CD14-positive monocyte (primary cell): ENCODE measurements at regions of chr7 and their contacts with region 1.

Region 1: GRCh38 chr7:123797673-123798527 is 47.1 kb upstream of the HYAL4 start:
- DNase-seq: peak in 2 of 3 donors; percentile 21 to 39
- H3K4me3 ChIP-seq: no peak overlapping the region
- H3K4me3 Mint-ChIP-seq: no peak overlapping the region
- H3K27ac ChIP-seq: no peak overlapping the region
- H3K27ac Mint-ChIP-seq: no peak overlapping the region
- H3K4me1 ChIP-seq: no peaks in the 10 kb centered on the region
- H3K4me1 Mint-ChIP-seq: no peaks in the 10 kb centered on the region
- H3K27me3 ChIP-seq: no peaks in the 10 kb centered on the region
- H3K27me3 Mint-ChIP-seq: peaks cover 0 to 5% (median under 1%) of the 10 kb centered on the region in 3 donors
- CTCF ChIP-seq: peak; percentile 73

Region 2: DNA sequence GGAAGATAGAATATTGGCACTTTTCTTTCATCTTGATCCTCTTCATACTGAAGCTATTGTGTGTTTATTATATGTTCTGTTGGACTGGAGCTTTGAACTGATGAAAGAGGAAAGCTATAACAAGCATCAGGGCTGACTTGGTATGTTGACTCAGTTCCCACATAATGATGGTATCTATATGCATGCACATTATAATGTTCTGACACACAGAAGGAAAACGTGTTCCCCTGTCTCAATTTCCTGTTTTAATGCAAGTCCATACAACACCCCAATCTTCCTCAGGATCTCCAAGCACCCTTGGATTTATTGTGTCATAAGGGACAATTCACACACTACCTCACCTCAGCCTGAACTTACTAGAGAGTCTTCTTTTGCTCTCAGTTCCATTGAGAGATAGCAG is 40.8 kb before region 1 on chr7:
- intact Hi-C with region 1: no loop called
- DNase-seq: no peak
- H3K4me3 ChIP-seq: no peak overlapping the region
- H3K4me3 Mint-ChIP-seq: no peak overlapping the region
- H3K27ac ChIP-seq: no peak overlapping the region
- H3K27ac Mint-ChIP-seq: no peak overlapping the region
- H3K4me1 ChIP-seq: peaks cover 0 to 4% of the 10 kb centered on the region in 2 donors
- H3K4me1 Mint-ChIP-seq: peaks cover 11% of the 10 kb centered on the region
- H3K27me3 ChIP-seq: no peaks in the 10 kb centered on the region
- H3K27me3 Mint-ChIP-seq: peaks cover 0 to 2% (median 2%) of the 10 kb centered on the region in 3 donors
- CTCF ChIP-seq: no peak

Region 3: GRCh38 chr7:123849855-123850254 is 52.0 kb after region 1 on chr7:
- intact Hi-C with region 1: loop called in 1 of 2 experiments (anchors 5 kb)
- DNase-seq: no peak
- H3K4me3 ChIP-seq: no peak overlapping the region
- H3K4me3 Mint-ChIP-seq: no peak overlapping the region
- H3K27ac ChIP-seq: no peak overlapping the region
- H3K27ac Mint-ChIP-seq: no peak overlapping the region
- H3K4me1 ChIP-seq: no peaks in the 10 kb centered on the region
- H3K4me1 Mint-ChIP-seq: no peaks in the 10 kb centered on the region
- H3K27me3 ChIP-seq: no peaks in the 10 kb centered on the region
- H3K27me3 Mint-ChIP-seq: peaks cover 2 to 3% (median 2%) of the 10 kb centered on the region in 3 donors
- CTCF ChIP-seq: no peak

Region 4: DNA sequence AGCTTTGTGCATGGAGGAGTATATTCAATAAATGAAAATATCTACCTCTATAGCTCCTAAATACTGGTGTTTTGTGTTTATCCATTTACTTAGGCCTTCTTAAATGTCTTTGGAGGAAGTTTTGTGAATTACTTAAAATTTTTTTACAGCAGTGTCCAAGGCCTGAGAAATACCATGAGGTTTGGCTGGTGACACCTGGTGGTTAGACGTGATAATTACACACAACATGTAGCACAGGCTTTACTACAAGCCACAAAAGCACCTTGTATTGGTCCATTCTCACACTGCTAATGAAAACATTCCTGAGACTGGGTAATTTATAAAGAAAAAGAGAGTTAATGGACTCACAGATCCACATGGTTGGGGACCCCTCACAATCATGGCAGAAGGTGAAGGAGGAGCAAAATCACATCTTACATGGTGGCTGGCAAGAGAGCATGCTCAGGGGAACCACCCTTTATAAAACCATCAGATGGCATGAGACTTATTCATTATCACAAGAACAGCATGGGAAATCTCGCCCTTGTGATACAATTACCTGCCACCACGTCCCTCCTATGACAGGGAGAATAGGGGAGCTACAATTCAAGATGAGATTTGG is 67.7 kb after region 1 on chr7:
- intact Hi-C with region 1: loop called in 1 of 2 experiments (anchors 5 kb)
- DNase-seq: peak; percentile 41 to 59 (median 59)
- H3K4me3 ChIP-seq: no peak overlapping the region
- H3K4me3 Mint-ChIP-seq: no peak overlapping the region
- H3K27ac ChIP-seq: no peak overlapping the region
- H3K27ac Mint-ChIP-seq: peak overlapping the region in 2 of 7 donors; percentile 7 to 74
- H3K4me1 ChIP-seq: peaks cover 26 to 31% of the 10 kb centered on the region in 2 donors
- H3K4me1 Mint-ChIP-seq: peaks cover 39% of the 10 kb centered on the region
- H3K27me3 ChIP-seq: no peaks in the 10 kb centered on the region
- H3K27me3 Mint-ChIP-seq: peaks cover 0 to 5% (median 5%) of the 10 kb centered on the region in 3 donors
- CTCF ChIP-seq: peak; percentile 86

Region 5: DNA sequence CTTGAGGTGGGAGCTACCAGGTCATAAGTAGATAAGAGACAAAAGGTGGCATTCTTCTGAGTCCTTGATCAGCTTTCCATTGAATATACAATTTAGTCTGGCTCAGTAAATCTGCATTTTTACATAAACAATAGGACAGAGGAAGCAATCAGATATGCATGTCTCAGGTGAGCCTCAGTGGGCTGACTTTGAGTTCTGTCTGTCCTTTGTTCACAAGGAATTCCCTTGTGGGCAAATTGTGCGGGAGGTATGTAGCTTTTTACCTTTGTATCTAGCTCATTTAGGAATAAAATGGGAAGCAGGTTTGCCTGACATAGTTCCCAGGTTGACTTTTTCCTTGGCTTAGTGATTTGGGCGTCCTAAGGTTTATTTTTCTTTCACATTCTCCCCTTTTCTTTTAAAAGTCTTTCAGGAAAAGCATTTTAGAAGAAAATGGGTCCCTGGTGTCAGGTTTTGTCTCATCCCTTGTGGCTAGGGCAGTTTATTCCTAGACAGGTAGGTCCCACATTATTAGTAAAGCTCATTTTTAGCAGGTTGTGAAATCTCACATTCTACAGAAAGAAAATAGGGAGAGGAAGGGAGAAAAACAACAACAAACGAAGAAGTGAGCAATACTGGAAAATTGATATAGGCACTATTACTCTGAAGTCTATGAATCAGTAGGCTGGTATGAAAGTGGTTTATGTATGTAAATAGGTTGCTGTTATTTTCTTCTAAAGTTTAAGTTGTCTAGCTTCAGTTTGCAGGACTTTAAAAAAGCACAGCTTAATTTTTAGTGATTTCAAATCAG is 143.7 kb after region 1 on chr7:
- intact Hi-C with region 1: no loop called
- DNase-seq: no peak
- H3K4me3 ChIP-seq: no peak overlapping the region
- H3K4me3 Mint-ChIP-seq: no peak overlapping the region
- H3K27ac ChIP-seq: no peak overlapping the region
- H3K27ac Mint-ChIP-seq: no peak overlapping the region
- H3K4me1 ChIP-seq: no peaks in the 10 kb centered on the region
- H3K4me1 Mint-ChIP-seq: no peaks in the 10 kb centered on the region
- H3K27me3 ChIP-seq: no peaks in the 10 kb centered on the region
- H3K27me3 Mint-ChIP-seq: peaks cover 0 to 2% (median 2%) of the 10 kb centered on the region in 3 donors
- CTCF ChIP-seq: no peak